ENCODE measurements at regions of chr4 and their contacts with region 1.

Region 1: GRCh38 chr4:70183168-70183939 is 12.2 kb upstream of the ODAM start:
- DNase-seq: peak; percentile 75
- ATAC-seq: peak; percentile 20; the same call in 2 of the 3 replicates
- H3K4me3 ChIP-seq: peak overlapping the region in 1 of 3 experiments; percentile 13; a peak in 1 of 6 replicates
- H3K27ac ChIP-seq: peak overlapping the region; percentile 90
- H3K4me1 ChIP-seq: peaks cover 73% of the 10 kb centered on the region
- H3K27me3 ChIP-seq: no peaks in the 10 kb centered on the region
- CTCF ChIP-seq: peak; percentile 64
- EP300 ChIP-seq: no peak
- POLR2A ChIP-seq: no peak
- RAD21 ChIP-seq: peak; percentile 69

Region 2: DNA sequence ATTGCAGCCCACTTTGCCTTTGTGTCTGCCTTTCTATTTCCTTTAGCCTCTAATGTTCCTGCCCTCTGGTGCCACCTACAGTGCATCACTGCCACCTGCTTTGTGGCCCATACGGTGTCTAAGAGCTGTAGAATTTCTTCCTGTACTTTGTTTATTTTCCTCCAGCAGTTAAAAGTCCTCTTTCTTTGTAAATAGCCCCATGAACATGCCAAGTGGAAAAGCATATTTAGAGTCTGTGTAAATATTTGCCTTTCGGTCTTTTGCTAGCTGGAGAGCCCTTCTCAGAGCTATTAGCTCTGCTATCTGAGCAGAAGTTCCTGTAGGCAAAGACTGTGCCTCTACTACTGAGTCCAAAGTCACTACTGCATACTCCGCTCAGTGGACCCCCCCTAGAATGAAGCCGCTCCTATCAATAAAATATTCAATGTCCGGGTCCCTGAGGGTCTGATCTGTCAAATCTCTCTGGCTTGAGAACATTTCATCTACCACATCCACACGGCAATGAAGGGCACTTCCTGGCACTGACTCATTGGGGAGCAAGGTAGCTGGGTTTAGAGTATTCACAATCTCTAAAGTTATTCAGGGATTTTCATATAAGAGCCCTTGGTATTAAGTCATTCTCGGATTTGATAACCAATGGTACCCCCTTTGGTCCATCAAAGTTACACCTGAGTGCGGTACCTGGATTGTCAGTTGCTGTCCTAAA is 359.7 kb before region 1 on chr4:
- CTCF ChIA-PET with region 1: no interaction called
- POLR2A ChIA-PET with region 1: interaction called, 12 read pairs
- in situ Hi-C with region 1: no loop called
- intact Hi-C with region 1: loop called (anchors 1 kb)
- DNase-seq: peak; percentile 98
- ATAC-seq: peak; percentile 98
- H3K4me3 ChIP-seq: 0 out of 6 replicates have a peak overlapping the region, but pooled peaks of 1 of the 3 experiments have one; percentile 4
- H3K27ac ChIP-seq: peak overlapping the region; percentile 80
- H3K4me1 ChIP-seq: peaks cover 60% of the 10 kb centered on the region
- H3K27me3 ChIP-seq: no peaks in the 10 kb centered on the region
- CTCF ChIP-seq: peak; percentile 93
- EP300 ChIP-seq: peak in 1 of 2 experiments; percentile 99; a peak in 3 of 4 replicates
- POLR2A ChIP-seq: no peak
- RAD21 ChIP-seq: peak; percentile 91; the same call in 1 of the 2 replicates

Region 3: GRCh38 chr4:69881173-69881773 is 302.1 kb before region 1 on chr4:
- CTCF ChIA-PET with region 1: no interaction called
- POLR2A ChIA-PET with region 1: no interaction called
- in situ Hi-C with region 1: loop called (anchors 10 kb)
- intact Hi-C with region 1: loop called (anchors 5 kb)
- DNase-seq: peak; percentile 66
- ATAC-seq: peak; percentile 74
- H3K4me3 ChIP-seq: no peak overlapping the region
- H3K27ac ChIP-seq: peak overlapping the region; percentile 17
- H3K4me1 ChIP-seq: peaks cover 53% of the 10 kb centered on the region
- H3K27me3 ChIP-seq: no peaks in the 10 kb centered on the region
- CTCF ChIP-seq: peak; percentile 89
- EP300 ChIP-seq: peak in 1 of 2 experiments; percentile 39; a peak in 2 of 4 replicates
- POLR2A ChIP-seq: no peak
- RAD21 ChIP-seq: peak; percentile 89

Region 4: GRCh38 chr4:69970071-69970470 is 213.3 kb before region 1 on chr4:
- CTCF ChIA-PET with region 1: no interaction called
- POLR2A ChIA-PET with region 1: no interaction called
- in situ Hi-C with region 1: no loop called
- intact Hi-C with region 1: loop called (anchors 1 kb)
- DNase-seq: peak; percentile 63
- ATAC-seq: peak; percentile 94
- H3K4me3 ChIP-seq: no peak overlapping the region
- H3K27ac ChIP-seq: peak overlapping the region; percentile 19
- H3K4me1 ChIP-seq: peaks cover 14% of the 10 kb centered on the region
- H3K27me3 ChIP-seq: no peaks in the 10 kb centered on the region; a peak in 1 of 5 replicates
- CTCF ChIP-seq: no peak
- EP300 ChIP-seq: peak; percentile 22 to 45; a peak in 2 of 4 replicates
- POLR2A ChIP-seq: no peak
- RAD21 ChIP-seq: no peak

Region 5: DNA sequence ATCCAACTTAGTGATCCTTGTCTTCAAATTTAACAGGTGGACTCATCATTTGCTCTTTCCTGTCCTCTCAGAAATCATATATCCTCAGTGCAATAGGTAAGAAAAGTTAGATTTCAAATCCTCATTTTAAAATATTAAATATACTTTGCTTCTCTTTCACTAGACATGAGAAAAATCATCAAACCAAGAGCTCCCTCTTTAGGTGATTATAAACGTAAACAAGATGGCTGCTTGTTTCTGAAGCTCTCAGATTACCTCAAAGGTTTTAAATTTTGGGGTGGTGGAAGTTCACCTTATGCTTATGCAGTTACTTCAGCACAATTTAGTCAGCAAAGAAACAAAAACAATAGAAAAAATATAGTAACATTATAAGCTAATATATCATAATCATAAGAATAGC is 86.3 kb after region 1 on chr4:
- CTCF ChIA-PET with region 1: no interaction called
- POLR2A ChIA-PET with region 1: no interaction called
- in situ Hi-C with region 1: no loop called
- intact Hi-C with region 1: loop called (anchors 2 kb)
- DNase-seq: peak; percentile 10
- ATAC-seq: no peak
- H3K4me3 ChIP-seq: no peak overlapping the region
- H3K27ac ChIP-seq: no peak overlapping the region
- H3K4me1 ChIP-seq: no peaks in the 10 kb centered on the region
- H3K27me3 ChIP-seq: no peaks in the 10 kb centered on the region
- CTCF ChIP-seq: peak; percentile 39
- EP300 ChIP-seq: no peak
- POLR2A ChIP-seq: no peak
- RAD21 ChIP-seq: no peak; the same call in 1 of the 2 replicates